Posterior vena cava (tissue), 2 donors: ENCODE measurements at regions of chr10 and their contacts with region 1.

Region 1: DNA sequence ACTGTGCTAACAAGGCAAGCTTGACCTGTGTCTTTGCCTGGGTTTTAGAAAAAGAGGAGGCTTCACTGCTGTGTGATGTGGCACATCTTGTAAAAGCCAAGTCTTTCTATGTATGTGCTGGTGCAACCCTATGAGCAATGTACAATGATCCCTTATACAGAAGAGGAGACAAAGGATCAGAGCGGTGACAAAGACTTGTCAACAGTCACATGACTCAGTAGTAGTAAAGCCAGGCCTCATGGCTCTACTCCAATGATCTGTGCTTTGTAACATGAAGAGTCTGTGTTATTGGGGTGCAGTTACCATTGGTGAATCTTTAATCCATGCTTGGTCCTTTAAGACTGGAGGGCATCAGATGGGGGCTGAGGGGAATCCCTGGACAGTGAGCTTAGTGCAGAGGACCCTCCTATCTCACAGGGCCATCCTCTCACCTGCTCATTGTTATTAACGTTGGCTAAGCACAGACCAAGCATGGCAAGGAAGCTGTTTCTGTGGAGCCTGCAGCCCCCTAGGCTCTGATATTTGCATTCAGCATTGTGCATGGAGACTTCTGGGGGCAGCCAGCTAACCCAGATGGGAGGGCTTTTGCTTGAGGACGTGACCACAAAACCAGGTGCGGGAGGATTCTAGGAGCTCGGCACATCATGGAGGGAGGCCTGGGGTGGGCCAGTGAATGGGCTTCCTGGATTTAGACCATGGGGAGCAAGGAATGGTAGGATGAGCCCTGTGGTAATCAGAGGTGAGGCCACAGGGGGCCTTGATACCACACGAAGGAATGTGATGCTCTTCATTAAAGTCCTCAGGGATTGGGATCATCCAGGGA is 308.8 kb upstream of the ZNF32 start:
- DNase-seq: peak; percentile 41

Region 2: GRCh38 chr10:43912469-43912868 is 45.0 kb before region 1 on chr10:
- intact Hi-C with region 1: loop called in 1 of 2 experiments (anchors 1 kb)
- DNase-seq: no peak